Calu3 (cell line): ENCODE measurements at regions of chr16 and their contacts with region 1.

Region 1: DNA sequence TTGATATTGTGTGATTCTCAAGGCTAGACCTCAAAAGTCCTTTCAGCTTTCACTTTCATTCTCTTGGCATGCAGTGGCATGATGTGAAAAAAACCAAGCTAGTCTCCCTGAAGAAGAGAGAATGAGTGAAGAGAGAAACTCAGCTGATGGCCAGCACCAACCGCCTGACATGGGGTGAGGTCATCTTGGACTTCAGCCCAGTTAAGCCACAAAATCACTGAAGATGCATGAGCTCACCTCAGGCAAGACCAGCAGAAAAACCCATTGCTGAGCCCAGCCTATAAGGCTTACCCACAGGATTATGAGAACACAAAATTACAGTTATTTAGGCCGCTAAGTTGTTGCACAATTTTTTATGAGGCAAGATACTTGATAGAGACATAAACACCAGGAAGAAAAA is 496.5 kb downstream of the TOX3 start:
- DNase-seq: peak; percentile 78
- H3K4me3 Mint-ChIP-seq: peak overlapping the region; percentile 19
- H3K27ac Mint-ChIP-seq: peak overlapping the region; percentile 71
- H3K4me1 Mint-ChIP-seq: peaks cover 32% of the 10 kb centered on the region
- H3K27me3 Mint-ChIP-seq: no peaks in the 10 kb centered on the region
- CTCF ChIP-seq: no peak

Region 2: DNA sequence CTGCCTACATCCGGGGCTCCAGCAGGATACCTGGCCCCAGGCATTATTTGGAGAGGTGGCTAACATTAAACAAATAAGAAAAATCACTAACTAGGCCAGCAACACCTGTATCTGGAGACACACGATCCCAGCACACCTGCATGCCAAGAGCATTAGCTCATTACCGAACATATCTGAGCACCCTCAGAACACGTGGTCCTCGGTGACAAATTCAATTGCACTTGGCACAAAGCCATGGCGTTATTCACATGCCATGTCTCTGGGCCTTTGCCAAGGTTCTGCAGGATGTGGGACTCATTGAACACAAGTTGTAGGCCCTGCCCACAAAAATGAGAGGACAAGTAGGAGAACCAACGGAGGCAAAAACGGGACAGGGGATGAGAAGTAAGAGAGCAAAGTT is 55.8 kb before region 1 on chr16:
- CTCF ChIA-PET with region 1: no interaction called
- intact Hi-C with region 1: loop called (anchors 10 kb)
- DNase-seq: peak; percentile 98
- H3K4me3 Mint-ChIP-seq: peak overlapping the region; percentile 3
- H3K27ac Mint-ChIP-seq: peak overlapping the region; percentile 18
- H3K4me1 Mint-ChIP-seq: peaks cover 58% of the 10 kb centered on the region
- H3K27me3 Mint-ChIP-seq: no peaks in the 10 kb centered on the region
- CTCF ChIP-seq: no peak